GM10248 (cell line): ENCODE measurements at regions of chr5 and their contacts with region 1.

Region 1: DNA sequence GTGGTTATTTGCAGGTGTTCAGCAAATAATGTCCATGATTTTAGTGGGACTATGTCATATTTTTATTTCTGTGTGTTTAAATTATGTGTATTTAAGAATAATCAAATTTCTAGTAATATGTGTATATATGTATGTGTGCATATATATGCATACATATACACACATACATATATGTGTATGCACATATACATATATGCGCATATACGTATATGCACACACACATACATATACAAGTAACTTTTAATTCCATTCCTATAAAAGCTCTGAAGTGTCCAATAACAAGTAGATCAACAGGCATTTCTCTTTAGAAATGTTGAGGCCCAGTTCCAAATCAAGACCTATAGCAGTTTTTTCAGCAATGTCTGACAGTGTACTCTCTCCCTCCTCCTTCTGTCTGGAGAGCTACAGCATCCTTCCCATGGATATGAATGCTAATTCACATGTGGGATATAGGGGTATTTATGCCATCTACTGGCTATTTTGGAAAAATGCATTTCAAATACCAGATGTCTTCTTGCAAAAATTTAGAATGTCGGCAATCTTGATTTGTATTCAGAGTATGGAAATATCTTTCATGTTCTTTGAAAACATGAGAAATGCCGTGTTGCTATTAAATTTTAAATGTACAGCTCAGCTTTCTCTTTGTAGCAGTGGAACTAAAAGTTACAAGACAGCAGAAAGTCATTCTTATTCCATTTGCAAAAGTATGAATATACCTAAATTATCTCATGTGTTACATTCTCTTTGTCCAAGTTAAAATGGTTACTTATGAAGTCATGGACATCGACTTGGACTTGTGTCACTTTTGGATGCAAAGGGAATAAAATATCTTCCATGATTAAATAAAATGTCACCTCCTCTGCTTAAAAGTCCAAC is 647.7 kb downstream of the TAF11L14 start:
- DNase-seq: peak; percentile 13
- CTCF ChIP-seq: peak; percentile 30

Region 2: DNA sequence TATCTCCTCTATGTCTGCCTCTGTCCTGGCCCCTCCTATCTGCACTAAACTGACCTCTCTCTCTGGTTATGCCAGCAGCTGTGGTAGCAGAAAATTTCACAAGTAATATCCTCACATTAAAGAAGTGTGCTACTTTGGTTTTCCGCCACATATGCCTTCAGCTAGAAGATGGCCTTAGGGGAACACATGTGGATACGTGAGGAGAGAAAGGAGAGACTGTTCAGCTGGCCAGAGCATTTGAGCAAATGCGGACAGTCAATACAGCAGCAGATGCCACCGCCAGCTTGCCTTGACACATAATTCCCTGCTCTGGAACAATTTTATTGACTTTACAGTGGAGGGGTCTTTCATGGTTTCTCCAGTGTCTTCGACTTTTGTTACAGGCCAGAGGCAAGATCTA is 213.1 kb before region 1 on chr5:
- CTCF ChIA-PET with region 1: no interaction called
- POLR2A ChIA-PET with region 1: no interaction called
- DNase-seq: no peak
- CTCF ChIP-seq: no peak

Region 3: GRCh38 chr5:18270683-18271338 is 11.1 kb before region 1 on chr5:
- CTCF ChIA-PET with region 1: interaction called, 10 read pairs
- POLR2A ChIA-PET with region 1: no interaction called
- DNase-seq: no peak
- CTCF ChIP-seq: no peak